Stomach (tissue), 19 donors: ENCODE measurements at regions of chr5 and their contacts with region 1.

Region 1: GRCh38 chr5:59188419-59189225 is 605.7 kb downstream of the RAB3C start:
- DNase-seq: peak; percentile 77 to 90
- H3K4me3 ChIP-seq: peak overlapping the region; percentile 15 to 35 (median 28)
- H3K27ac ChIP-seq: peak overlapping the region in 4 of 5 donors; percentile 30 to 61 (median 50)
- H3K4me1 ChIP-seq: peaks cover 0 to 38% (median 17%) of the 10 kb centered on the region in 4 donors
- H3K27me3 ChIP-seq: no peaks in the 10 kb centered on the region
- CTCF ChIP-seq: peak in 5 of 7 experiments; percentile 50 to 89 (median 83)
- EP300 ChIP-seq: no peak
- POLR2A ChIP-seq: no peak

Region 2: GRCh38 chr5:58431832-58432231 is 756.8 kb before region 1 on chr5:
- intact Hi-C with region 1: no loop called
- DNase-seq: no peak
- H3K4me3 ChIP-seq: no peak overlapping the region
- H3K27ac ChIP-seq: no peak overlapping the region
- H3K4me1 ChIP-seq: no peaks in the 10 kb centered on the region
- H3K27me3 ChIP-seq: no peaks in the 10 kb centered on the region
- CTCF ChIP-seq: no peak
- EP300 ChIP-seq: no peak
- POLR2A ChIP-seq: no peak

Region 3: DNA sequence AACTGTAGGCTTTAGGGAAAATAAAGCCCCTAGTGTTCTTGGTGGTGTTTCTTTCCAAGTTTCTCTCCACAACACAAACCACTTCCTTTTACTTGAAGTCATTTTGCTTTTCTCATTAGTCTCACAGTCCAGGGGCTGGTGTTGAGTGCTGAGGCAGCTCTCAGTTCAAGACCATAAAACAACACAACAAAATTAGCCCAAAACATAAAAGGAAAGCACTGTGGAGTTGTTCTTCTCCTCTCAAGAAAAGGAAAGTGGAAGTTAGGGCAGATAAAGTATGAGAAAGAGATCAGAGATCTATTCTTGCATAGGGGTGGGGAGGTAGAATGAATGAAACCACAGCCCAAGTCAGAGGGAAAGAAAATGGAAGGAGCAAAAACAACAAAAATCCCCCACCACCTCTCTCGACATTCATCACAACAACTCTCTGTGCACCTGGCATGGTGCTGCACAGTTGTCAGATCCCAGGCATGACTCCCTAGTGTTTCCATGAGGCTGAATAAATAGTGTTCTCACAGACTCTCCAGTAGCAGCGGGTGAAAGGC is 35.8 kb before region 1 on chr5:
- intact Hi-C with region 1: no loop called
- DNase-seq: no peak
- H3K4me3 ChIP-seq: no peak overlapping the region
- H3K27ac ChIP-seq: no peak overlapping the region
- H3K4me1 ChIP-seq: peaks cover 0 to 9% (median 4%) of the 10 kb centered on the region in 4 donors
- H3K27me3 ChIP-seq: no peaks in the 10 kb centered on the region
- CTCF ChIP-seq: no peak
- EP300 ChIP-seq: no peak
- POLR2A ChIP-seq: no peak

Region 4: GRCh38 chr5:59371525-59372127 is 183.0 kb after region 1 on chr5:
- intact Hi-C with region 1: loop called (anchors 10 kb)
- DNase-seq: no peak
- H3K4me3 ChIP-seq: no peak overlapping the region
- H3K27ac ChIP-seq: no peak overlapping the region
- H3K4me1 ChIP-seq: peaks cover 0 to 9% (median 3%) of the 10 kb centered on the region in 4 donors
- H3K27me3 ChIP-seq: no peaks in the 10 kb centered on the region
- CTCF ChIP-seq: no peak
- EP300 ChIP-seq: no peak
- POLR2A ChIP-seq: no peak